ENCODE measurements at regions of chr3 and their contacts with region 1.

Region 1: GRCh38 chr3:50235716-50236496 is at the start of gene GNAI2:
- DNase-seq: peak; percentile 98 to 99 (median 98)
- ATAC-seq: peak; percentile 85
- H3K4me3 ChIP-seq: peak within 1 kb of the TSS; percentile 94 to 100
- H3K4me3 Mint-ChIP-seq: peak within 1 kb of the TSS; percentile 96
- H3K27ac ChIP-seq: peak within 1 kb of the TSS; percentile 72 to 83
- H3K27ac Mint-ChIP-seq: peak within 1 kb of the TSS; percentile 96
- H3K4me1 ChIP-seq: peaks cover 38% of the 10 kb centered on the region
- H3K4me1 Mint-ChIP-seq: peaks cover 33% of the 10 kb centered on the region
- H3K27me3 ChIP-seq: no peaks in the 10 kb centered on the region
- H3K27me3 Mint-ChIP-seq: no peaks in the 10 kb centered on the region
- CTCF ChIP-seq: no peak
- total RNA-seq, gene GNAI2: 185 to 192 TPM

Region 2: GRCh38 chr3:49939858-49940666 is 295.8 kb before region 1 on chr3 and contains the start of gene RBM6:
- CTCF ChIA-PET with region 1: no interaction called
- POLR2A ChIA-PET with region 1: no interaction called
- intact Hi-C with region 1: loop called in 1 of 2 experiments (anchors 5 kb)
- DNase-seq: peak; percentile 82 to 97 (median 93)
- ATAC-seq: peak; percentile 98
- H3K4me3 ChIP-seq: peak within 1 kb of the TSS; percentile 78 to 98
- H3K4me3 Mint-ChIP-seq: peak within 1 kb of the TSS; percentile 99
- H3K27ac ChIP-seq: peak within 1 kb of the TSS; percentile 67 to 99
- H3K27ac Mint-ChIP-seq: peak within 1 kb of the TSS; percentile 98
- H3K4me1 ChIP-seq: peaks cover 15% of the 10 kb centered on the region
- H3K4me1 Mint-ChIP-seq: peaks cover 30% of the 10 kb centered on the region
- H3K27me3 ChIP-seq: no peaks in the 10 kb centered on the region
- H3K27me3 Mint-ChIP-seq: no peaks in the 10 kb centered on the region
- CTCF ChIP-seq: no peak
- total RNA-seq, gene RBM6: 92.1 to 95.0 TPM

Region 3: DNA sequence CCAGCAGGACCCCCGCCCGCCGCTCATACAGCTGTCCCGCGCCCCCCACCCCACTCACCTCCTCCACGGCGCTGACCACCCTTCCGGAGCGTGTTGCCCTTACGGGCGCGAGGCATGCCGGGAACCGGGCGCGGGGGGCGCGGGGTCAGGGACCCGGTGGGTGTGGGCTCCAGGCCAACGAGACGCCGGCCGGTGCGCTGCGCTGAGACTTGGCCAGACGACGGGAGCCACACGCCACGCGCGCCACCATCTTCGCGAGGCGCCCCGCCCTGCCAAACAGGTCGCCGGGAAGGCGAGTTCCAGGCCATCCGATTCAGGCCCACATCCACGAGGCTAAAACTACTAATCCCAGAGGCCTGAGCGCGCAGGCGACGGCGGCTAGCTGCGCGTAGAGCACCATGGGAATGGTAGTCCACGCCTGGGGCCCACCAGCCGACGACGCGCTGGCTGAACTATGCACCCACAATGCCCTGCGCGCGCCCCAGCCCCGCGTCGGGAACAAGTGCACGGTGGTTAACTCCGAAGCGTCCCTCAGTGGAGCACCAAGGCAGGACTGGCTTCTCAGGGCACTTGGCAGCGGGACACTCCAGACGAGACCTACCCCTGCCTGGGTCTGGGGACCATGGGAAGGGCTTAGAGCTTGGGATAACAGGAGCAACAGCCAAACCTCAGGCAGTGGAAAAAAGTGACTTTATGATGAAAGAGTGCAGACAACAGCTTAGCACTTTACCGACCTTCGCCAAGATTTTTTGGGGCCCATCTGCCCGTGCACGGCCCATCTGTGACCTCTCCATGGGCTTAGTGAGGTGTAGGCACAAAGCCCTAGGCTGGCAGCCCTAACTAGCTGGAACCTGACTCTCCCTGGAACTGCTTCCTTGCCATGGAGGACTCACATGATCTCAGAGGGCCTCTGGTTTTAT is 56.5 kb after region 1 on chr3 and contains the start of gene IFRD2:
- CTCF ChIA-PET with region 1: interaction called, 3 read pairs
- POLR2A ChIA-PET with region 1: no interaction called
- intact Hi-C with region 1: loop called in 1 of 2 experiments (anchors 1 kb)
- DNase-seq: peak in 8 of 9 experiments; percentile 92 to 98 (median 94)
- ATAC-seq: peak; percentile 98
- H3K4me3 ChIP-seq: peak within 1 kb of the TSS; percentile 87 to 88
- H3K4me3 Mint-ChIP-seq: peak within 1 kb of the TSS; percentile 89
- H3K27ac ChIP-seq: peak within 1 kb of the TSS; percentile 68 to 81
- H3K27ac Mint-ChIP-seq: peak within 1 kb of the TSS; percentile 96
- H3K4me1 ChIP-seq: peaks cover 13% of the 10 kb centered on the region
- H3K4me1 Mint-ChIP-seq: peaks cover 18% of the 10 kb centered on the region
- H3K27me3 ChIP-seq: no peaks in the 10 kb centered on the region
- H3K27me3 Mint-ChIP-seq: no peaks in the 10 kb centered on the region
- CTCF ChIP-seq: no peak
- total RNA-seq, gene IFRD2: 42.4 to 42.9 TPM

Region 4: GRCh38 chr3:50321336-50322114 is 85.6 kb after region 1 on chr3:
- CTCF ChIA-PET with region 1: interaction called, 3 read pairs
- POLR2A ChIA-PET with region 1: no interaction called
- intact Hi-C with region 1: loop called in 1 of 2 experiments (anchors 1 kb)
- DNase-seq: peak; percentile 65 to 89 (median 82)
- ATAC-seq: peak; percentile 69
- H3K4me3 ChIP-seq: peak overlapping the region; percentile 71 to 96
- H3K4me3 Mint-ChIP-seq: peak overlapping the region; percentile 85
- H3K27ac ChIP-seq: peak overlapping the region; percentile 77 to 94
- H3K27ac Mint-ChIP-seq: peak overlapping the region; percentile 92
- H3K4me1 ChIP-seq: peaks cover 30% of the 10 kb centered on the region
- H3K4me1 Mint-ChIP-seq: peaks cover 41% of the 10 kb centered on the region
- H3K27me3 ChIP-seq: no peaks in the 10 kb centered on the region
- H3K27me3 Mint-ChIP-seq: no peaks in the 10 kb centered on the region
- CTCF ChIP-seq: peak; percentile 47

Region 5: DNA sequence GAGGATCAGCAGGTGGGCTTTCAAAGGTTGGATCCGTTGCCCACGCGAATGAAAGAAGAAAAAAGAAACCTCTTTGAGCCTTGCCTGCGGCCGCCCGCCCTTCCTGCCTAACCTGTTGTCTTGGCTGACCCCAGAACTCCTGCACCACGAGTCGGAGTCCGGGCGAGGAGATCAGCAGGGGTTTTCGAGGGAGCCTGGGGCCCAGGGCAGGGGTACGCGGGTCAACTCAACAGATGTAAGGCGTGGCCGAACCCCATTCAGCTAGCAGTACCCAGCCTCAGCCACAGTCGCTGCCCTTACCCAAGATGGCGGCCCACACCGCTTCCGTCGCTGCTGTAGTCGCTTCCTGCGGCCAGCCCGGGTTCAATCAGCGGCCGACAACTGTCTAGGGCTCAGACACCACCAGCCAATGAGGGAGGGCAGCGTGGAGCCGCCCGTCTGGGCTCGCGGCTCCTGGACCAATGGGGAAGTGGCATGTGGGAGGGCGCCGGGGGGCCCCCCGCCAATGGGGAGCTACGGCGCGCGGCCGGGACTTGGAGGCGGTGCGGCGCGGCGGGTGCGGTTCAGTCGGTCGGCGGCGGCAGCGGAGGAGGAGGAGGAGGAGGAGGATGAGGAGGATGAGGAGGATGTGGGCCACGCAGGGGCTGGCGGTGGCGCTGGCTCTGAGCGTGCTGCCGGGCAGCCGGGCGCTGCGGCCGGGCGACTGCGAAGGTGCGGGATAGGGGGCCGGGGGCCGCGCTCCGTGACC is 1149.0 kb after region 1 on chr3 and contains the start of gene MANF:
- CTCF ChIA-PET with region 1: no interaction called
- POLR2A ChIA-PET with region 1: no interaction called
- intact Hi-C with region 1: loop called in 1 of 2 experiments (anchors 10 kb)
- DNase-seq: peak; percentile 94 to 99 (median 97)
- ATAC-seq: peak; percentile 93
- H3K4me3 ChIP-seq: peak within 1 kb of the TSS; percentile 86 to 94
- H3K4me3 Mint-ChIP-seq: peak within 1 kb of the TSS; percentile 99
- H3K27ac ChIP-seq: peak within 1 kb of the TSS; percentile 90 to 93
- H3K27ac Mint-ChIP-seq: peak within 1 kb of the TSS; percentile 100
- H3K4me1 ChIP-seq: peaks cover 35% of the 10 kb centered on the region
- H3K4me1 Mint-ChIP-seq: peaks cover 44% of the 10 kb centered on the region
- H3K27me3 ChIP-seq: no peaks in the 10 kb centered on the region
- H3K27me3 Mint-ChIP-seq: no peaks in the 10 kb centered on the region
- CTCF ChIP-seq: no peak
- total RNA-seq, gene MANF: 32.2 to 35.0 TPM

Measured in CD8-positive, alpha-beta T cell (primary cell).